Psoas muscle (tissue), 8 donors: ENCODE measurements at regions of chr11 and their contacts with region 1.

Region 1: GRCh38 chr11:6353367-6353987 is 33.2 kb upstream of the CAVIN3 start:
- DNase-seq: peak; percentile 38 to 68
- ATAC-seq: peak; percentile 63 to 82 (median 72)
- H3K4me3 ChIP-seq: no peak overlapping the region
- H3K27ac ChIP-seq: no peak overlapping the region
- H3K4me1 ChIP-seq: no peaks in the 10 kb centered on the region
- H3K27me3 ChIP-seq: no peaks in the 10 kb centered on the region
- CTCF ChIP-seq: peak; percentile 94

Region 2: GRCh38 chr11:6022956-6023355 is 330.5 kb before region 1 on chr11:
- intact Hi-C with region 1: loop called (anchors 5 kb)
- DNase-seq: no peak
- ATAC-seq: peak in 2 of 4 donors; percentile 39 to 56
- H3K4me3 ChIP-seq: no peak overlapping the region
- H3K27ac ChIP-seq: no peak overlapping the region
- H3K4me1 ChIP-seq: no peaks in the 10 kb centered on the region
- H3K27me3 ChIP-seq: no peaks in the 10 kb centered on the region
- CTCF ChIP-seq: peak; percentile 46

Region 3: GRCh38 chr11:6251120-6251733 is 102.2 kb before region 1 on chr11:
- intact Hi-C with region 1: loop called (anchors 2 to 10 kb)
- DNase-seq: peak; percentile 63 to 82
- ATAC-seq: peak; percentile 87 to 98 (median 95)
- H3K4me3 ChIP-seq: no peak overlapping the region
- H3K27ac ChIP-seq: no peak overlapping the region
- H3K4me1 ChIP-seq: no peaks in the 10 kb centered on the region
- H3K27me3 ChIP-seq: peaks cover 0 to 7% (median 0%) of the 10 kb centered on the region in 3 donors
- CTCF ChIP-seq: peak; percentile 87

Region 4: DNA sequence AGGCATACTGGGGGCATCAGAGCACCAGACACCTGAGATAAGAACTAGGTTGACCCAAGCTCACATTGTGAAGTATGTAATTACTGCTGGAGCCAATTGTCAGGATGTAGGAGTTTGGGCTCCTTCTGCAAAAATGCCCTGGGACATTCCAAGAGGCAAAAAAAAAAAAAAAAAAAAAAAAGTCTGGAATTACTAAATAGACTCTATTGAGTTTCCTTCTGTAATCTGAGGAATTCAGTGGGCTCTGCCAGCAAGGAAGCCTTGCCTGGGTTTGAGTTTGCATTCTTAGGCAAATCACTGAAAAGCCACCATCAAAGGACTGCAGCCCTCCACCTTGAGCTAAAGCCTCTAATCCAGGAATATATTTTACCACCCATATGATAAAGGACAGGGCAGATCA is 25.2 kb before region 1 on chr11:
- intact Hi-C with region 1: no loop called
- DNase-seq: no peak
- ATAC-seq: no peak
- H3K4me3 ChIP-seq: no peak overlapping the region
- H3K27ac ChIP-seq: no peak overlapping the region
- H3K4me1 ChIP-seq: peaks cover 3% of the 10 kb centered on the region
- H3K27me3 ChIP-seq: no peaks in the 10 kb centered on the region
- CTCF ChIP-seq: no peak